ENCODE measurements at regions of chr7 and their contacts with region 1.

Region 1: GRCh38 chr7:25565949-25566348 is 337.7 kb upstream of the NPVF start:
- DNase-seq: peak; percentile 49
- ATAC-seq: no peak
- H3K4me3 Mint-ChIP-seq: no peak overlapping the region
- H3K27ac Mint-ChIP-seq: no peak overlapping the region
- H3K4me1 Mint-ChIP-seq: peaks cover 3% of the 10 kb centered on the region; the same call in 1 of the 2 replicates
- H3K27me3 Mint-ChIP-seq: no peaks in the 10 kb centered on the region; the same call in 1 of the 2 replicates
- CTCF ChIP-seq: peak; percentile 100

Region 2: DNA sequence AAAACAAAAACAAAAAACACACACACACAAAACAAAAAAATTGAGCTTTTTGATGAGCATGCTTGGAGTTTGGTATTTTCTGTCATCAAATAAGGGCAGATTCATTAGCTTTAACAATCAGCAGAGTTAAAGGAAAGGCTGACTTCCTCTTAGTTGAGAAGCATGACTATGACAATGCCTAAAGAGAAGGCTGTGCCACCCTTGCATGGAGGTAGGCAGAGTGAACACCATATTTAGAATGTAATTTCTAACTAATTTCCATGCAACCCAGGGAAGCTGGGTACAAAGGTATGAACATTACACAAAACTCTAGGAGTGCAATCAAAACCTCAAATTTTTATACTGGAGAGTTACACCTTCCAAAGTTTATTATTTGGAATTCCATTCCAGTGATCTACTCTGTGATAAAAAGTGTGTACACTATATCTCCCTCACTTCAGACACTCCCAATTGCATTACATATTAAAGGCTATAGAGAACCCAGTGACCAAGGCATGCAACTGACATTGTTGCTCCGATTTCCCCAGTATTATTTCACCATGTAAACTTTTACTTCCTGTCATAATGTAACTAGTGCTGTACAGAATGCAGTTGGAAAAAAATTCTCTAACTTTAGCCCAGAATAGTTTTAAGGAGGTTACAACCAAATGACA is 431.5 kb before region 1 on chr7:
- CTCF ChIA-PET with region 1: no interaction called
- POLR2A ChIA-PET with region 1: no interaction called
- DNase-seq: no peak
- ATAC-seq: no peak
- H3K4me3 Mint-ChIP-seq: no peak overlapping the region
- H3K27ac Mint-ChIP-seq: no peak overlapping the region
- H3K4me1 Mint-ChIP-seq: 0 out of 2 replicates have a peak, but pooled peaks cover 5% of the 10 kb centered on the region
- H3K27me3 Mint-ChIP-seq: peaks cover 8% of the 10 kb centered on the region
- CTCF ChIP-seq: no peak

Region 3: DNA sequence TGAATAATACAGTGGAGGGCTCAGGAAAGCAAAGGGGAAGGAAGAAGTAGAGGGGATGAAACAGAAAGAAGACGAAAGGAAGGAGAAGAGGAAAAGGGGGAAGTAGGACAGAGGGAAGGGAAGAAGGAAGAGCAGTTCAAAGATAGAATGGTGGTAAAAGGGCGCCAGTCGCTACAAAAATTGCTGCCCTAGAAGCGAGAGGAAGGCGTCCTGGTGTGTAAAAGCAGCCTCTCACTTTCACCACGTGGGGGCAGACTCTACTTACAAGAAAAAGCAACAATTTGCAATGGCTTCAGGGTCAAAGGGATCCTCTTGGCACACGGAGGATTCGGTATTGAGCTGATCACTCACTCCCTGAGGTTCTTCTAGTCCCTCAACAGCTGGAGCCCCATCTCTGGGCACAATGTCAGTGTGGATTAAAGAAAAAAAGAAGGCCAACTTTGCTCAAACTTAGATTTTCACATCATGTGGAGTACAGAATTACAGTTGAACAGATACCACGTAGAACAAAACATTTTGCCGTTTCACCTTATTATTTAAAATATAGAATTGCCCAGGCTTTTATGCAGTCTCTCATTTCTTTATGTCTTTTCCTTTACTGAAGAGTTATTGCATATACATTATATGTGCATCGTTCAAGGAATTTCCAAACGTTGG is 306.2 kb before region 1 on chr7:
- CTCF ChIA-PET with region 1: interaction called, 56 read pairs
- POLR2A ChIA-PET with region 1: no interaction called
- DNase-seq: peak; percentile 69
- ATAC-seq: peak; percentile 95
- H3K4me3 Mint-ChIP-seq: no peak overlapping the region
- H3K27ac Mint-ChIP-seq: no peak overlapping the region
- H3K4me1 Mint-ChIP-seq: peaks cover 9% of the 10 kb centered on the region
- H3K27me3 Mint-ChIP-seq: no peaks in the 10 kb centered on the region; the same call in 1 of the 2 replicates
- CTCF ChIP-seq: peak; percentile 53

Region 4: DNA sequence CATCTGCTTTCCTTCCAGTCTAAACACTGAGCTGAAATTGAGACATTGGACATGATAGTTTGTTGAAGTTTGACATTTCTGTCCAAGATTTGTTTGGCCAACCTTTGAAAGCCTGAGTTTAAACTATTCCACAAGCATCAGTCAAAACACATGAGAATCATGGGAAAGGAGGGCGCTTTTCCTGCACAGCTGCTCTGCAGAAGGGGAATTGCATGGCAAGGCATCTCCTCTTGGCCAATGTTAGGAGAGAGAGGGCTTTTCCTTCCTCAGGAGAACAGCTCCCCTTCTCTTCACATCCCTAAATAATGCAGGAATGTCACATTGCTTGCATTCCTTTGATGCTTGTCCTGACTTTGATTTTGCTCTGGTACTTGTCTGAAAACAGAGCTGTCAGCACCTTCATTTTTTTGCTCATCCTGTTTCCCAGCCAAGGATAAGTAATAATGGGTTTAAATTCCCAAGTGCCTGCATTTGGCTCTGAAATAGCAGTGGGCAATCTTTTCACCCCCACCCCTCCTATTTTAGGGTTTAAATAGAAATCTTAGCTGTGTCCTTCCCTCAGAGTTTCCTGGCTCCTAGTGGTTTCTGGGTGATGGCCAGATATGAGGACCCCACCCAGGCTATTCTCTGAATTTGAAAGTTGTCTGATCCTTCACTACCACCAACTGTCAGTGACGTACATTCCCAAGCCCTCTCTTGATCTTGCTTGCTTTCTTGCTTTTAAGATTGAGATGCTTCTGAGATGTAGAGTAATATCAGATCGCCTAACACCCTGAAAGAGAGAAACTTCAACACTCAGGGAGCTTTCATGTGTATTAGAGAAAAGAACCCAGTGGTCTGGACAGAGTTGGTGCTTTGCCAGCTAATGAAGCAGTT is 262.4 kb before region 1 on chr7:
- CTCF ChIA-PET with region 1: no interaction called
- POLR2A ChIA-PET with region 1: no interaction called
- DNase-seq: peak; percentile 29
- ATAC-seq: peak; percentile 98
- H3K4me3 Mint-ChIP-seq: no peak overlapping the region
- H3K27ac Mint-ChIP-seq: peak overlapping the region; percentile 96
- H3K4me1 Mint-ChIP-seq: peaks cover 35% of the 10 kb centered on the region
- H3K27me3 Mint-ChIP-seq: no peaks in the 10 kb centered on the region
- CTCF ChIP-seq: no peak

Region 5: GRCh38 chr7:25389489-25390106 is 176.4 kb before region 1 on chr7:
- CTCF ChIA-PET with region 1: interaction called, 25 read pairs
- POLR2A ChIA-PET with region 1: no interaction called
- DNase-seq: no peak
- ATAC-seq: peak; percentile 62; the same call in 1 of the 2 replicates
- H3K4me3 Mint-ChIP-seq: no peak overlapping the region
- H3K27ac Mint-ChIP-seq: no peak overlapping the region
- H3K4me1 Mint-ChIP-seq: peaks cover 6% of the 10 kb centered on the region
- H3K27me3 Mint-ChIP-seq: no peaks in the 10 kb centered on the region
- CTCF ChIP-seq: no peak

Region 6: DNA sequence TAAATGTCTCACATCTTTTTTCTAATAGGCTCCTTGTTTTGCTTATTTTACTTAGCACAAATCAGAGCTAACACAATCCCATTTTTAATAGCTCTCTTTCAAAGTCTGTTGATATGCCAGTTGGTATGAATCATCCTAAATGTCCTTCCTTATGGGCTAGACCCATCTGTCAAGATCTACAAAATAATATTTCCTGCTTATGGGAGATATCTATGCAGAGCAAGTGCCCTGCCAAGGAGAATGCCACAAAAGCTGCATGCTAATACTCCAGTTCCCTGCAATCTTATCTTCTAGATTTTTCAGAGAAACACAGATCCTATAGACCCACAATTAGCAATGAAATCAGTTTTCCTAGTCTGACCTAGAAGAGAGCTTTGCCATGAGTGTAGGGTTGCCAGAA is 106.9 kb before region 1 on chr7:
- CTCF ChIA-PET with region 1: interaction called, 11 read pairs
- POLR2A ChIA-PET with region 1: no interaction called
- DNase-seq: no peak
- ATAC-seq: no peak
- H3K4me3 Mint-ChIP-seq: no peak overlapping the region
- H3K27ac Mint-ChIP-seq: no peak overlapping the region
- H3K4me1 Mint-ChIP-seq: peaks cover 19% of the 10 kb centered on the region
- H3K27me3 Mint-ChIP-seq: no peaks in the 10 kb centered on the region; the same call in 1 of the 2 replicates
- CTCF ChIP-seq: no peak

Region 7: DNA sequence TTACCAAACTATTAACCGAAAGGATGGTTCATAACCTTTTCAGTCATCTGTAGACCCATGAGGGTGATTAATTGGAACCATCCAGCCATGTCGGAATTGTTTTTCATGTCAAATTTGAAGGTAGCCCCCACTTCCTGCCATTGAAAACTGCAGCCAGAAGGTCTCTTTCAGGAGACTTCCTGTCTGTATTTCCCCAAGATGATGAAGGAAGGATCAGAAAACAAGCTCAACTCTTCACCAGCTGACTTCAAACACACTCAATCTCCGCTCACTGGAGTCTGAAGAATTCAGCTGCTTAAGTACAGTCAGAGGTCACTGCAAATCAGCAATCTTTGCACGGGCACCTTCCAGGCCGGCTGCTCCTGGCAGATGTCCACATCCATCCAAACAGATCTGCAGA is 45.9 kb before region 1 on chr7:
- CTCF ChIA-PET with region 1: interaction called, 10 read pairs
- POLR2A ChIA-PET with region 1: no interaction called
- DNase-seq: no peak
- ATAC-seq: no peak
- H3K4me3 Mint-ChIP-seq: no peak overlapping the region
- H3K27ac Mint-ChIP-seq: no peak overlapping the region
- H3K4me1 Mint-ChIP-seq: peaks cover 3% of the 10 kb centered on the region; the same call in 1 of the 2 replicates
- H3K27me3 Mint-ChIP-seq: no peaks in the 10 kb centered on the region; the same call in 1 of the 2 replicates
- CTCF ChIP-seq: no peak

Measured in WTC11 (cell line).